Activated CD4-positive, alpha-beta memory T cell treated with anti-CD3 and anti-CD28 coated beads for 36 hours (primary cell): ENCODE measurements at regions of chr19 and their contacts with region 1.

Region 1: DNA sequence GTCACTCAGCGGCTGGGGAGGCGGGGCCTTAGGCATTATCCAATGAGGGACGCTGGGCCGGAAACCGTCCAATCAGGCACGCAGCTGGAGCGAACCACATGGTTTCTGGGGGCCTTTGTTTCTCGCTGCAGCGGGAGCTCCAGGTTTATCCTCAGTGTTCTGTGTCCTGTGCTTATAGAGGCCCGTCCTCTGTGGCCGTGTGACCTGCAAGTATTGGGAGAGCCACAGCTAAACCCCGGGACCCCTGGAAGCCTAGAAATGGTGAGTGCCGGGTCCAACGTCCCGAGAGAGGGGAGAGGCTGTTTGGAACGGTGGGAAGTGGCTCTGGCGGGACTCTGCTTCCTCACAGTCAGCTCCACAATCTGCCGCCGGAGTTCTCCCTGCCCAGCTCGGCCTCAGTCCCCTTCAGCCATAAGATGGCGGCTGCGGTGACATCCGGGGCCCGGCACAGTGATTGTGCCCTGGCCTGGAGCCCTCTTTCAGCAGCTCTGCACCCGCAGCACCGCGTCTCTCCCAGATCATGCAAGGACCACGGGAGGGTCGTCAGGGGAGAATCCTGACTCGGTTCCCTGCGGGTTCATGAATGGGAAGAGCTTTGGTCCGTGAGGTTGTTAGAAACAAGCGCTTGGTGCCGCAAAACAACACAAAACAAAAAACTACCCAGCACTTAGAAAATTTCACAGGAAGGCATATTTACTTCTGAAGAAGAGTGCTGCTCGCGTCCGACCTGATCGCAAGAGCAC is at the start of gene ZNF253:
- DNase-seq: peak; percentile 98
- H3K4me3 Mint-ChIP-seq: peak within 1 kb of the TSS; percentile 99
- H3K27ac Mint-ChIP-seq: peak within 1 kb of the TSS; percentile 98
- H3K4me1 Mint-ChIP-seq: peaks cover 19% of the 10 kb centered on the region
- H3K27me3 Mint-ChIP-seq: no peaks in the 10 kb centered on the region
- total RNA-seq, gene ZNF253: 11.0 to 12.9 TPM

Region 2: DNA sequence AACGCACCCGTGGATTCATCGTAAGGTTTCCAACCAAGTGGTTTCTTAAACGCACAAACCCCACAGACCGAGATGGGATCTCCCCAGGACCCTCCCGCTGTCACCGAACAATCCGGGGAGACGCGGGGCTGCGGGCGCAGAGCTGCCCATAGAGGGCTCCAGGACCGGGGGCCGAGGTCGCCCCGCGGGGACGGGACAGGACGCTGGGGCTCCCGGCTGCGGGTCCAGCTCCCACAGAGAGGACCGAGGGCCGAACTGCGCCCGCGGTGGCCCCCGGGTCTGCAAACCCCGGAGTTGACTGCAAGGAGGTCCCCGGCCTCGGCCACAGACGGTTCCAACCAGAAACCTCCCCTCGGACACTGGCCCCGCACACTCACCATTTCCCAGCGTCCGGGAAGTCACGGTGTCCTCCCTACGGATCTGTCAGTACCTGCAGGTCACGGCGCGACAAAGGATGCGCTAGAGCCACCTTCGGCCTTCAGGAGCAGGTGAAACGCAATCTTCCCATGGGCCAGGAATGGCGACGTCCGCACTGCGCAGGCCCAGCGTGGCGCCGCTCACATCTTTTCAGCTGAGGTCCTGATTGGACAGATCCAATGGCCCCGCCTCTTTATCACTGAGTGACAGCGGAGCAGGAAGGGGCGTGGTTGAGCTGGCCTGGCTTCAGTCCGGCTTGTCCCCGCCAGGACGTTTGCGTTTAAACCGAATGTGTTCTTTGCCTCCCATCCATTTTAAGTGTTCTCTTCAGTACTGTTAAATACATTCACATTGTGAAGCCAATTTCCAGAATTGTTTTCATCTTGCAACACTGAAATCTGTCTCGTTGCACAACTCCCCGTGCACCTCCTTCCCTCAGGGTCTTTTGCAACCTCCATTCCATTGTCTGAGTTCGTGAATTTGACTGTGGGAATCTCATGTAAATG is 133.1 kb before region 1 on chr19 and contains the start of gene ZNF14:
- CTCF ChIA-PET with region 1: no interaction called
- POLR2A ChIA-PET with region 1: interaction called, 7 read pairs
- intact Hi-C with region 1: loop called (anchors 2 kb)
- DNase-seq: peak; percentile 96
- H3K4me3 Mint-ChIP-seq: peak within 1 kb of the TSS; percentile 99
- H3K27ac Mint-ChIP-seq: peak within 1 kb of the TSS; percentile 94
- H3K4me1 Mint-ChIP-seq: peaks cover 17% of the 10 kb centered on the region
- H3K27me3 Mint-ChIP-seq: no peaks in the 10 kb centered on the region
- total RNA-seq, gene ZNF14: 6.8 to 7.9 TPM

Region 3: GRCh38 chr19:19776041-19777008 is 89.6 kb before region 1 on chr19:
- CTCF ChIA-PET with region 1: interaction called, 3 read pairs
- POLR2A ChIA-PET with region 1: interaction called, 12 read pairs
- intact Hi-C with region 1: loop called (anchors 2 kb)
- DNase-seq: peak; percentile 96
- H3K4me3 Mint-ChIP-seq: peak overlapping the region; percentile 97
- H3K27ac Mint-ChIP-seq: peak overlapping the region; percentile 93
- H3K4me1 Mint-ChIP-seq: peaks cover 44% of the 10 kb centered on the region
- H3K27me3 Mint-ChIP-seq: no peaks in the 10 kb centered on the region

Region 4: GRCh38 chr19:19900729-19901444 is 35.0 kb after region 1 on chr19 and contains the start of gene ZNF93:
- CTCF ChIA-PET with region 1: interaction called, 7 read pairs
- POLR2A ChIA-PET with region 1: interaction called, 31 read pairs
- intact Hi-C with region 1: loop called (anchors 1 kb)
- DNase-seq: peak; percentile 96
- H3K4me3 Mint-ChIP-seq: peak within 1 kb of the TSS; percentile 98
- H3K27ac Mint-ChIP-seq: peak within 1 kb of the TSS; percentile 96
- H3K4me1 Mint-ChIP-seq: peaks cover 35% of the 10 kb centered on the region
- H3K27me3 Mint-ChIP-seq: no peaks in the 10 kb centered on the region
- total RNA-seq, gene ZNF93: 15.6 to 17.0 TPM

Region 5: GRCh38 chr19:20039203-20039723 is 173.4 kb after region 1 on chr19 and contains the start of gene ZNF682:
- CTCF ChIA-PET with region 1: no interaction called
- POLR2A ChIA-PET with region 1: no interaction called
- intact Hi-C with region 1: loop called (anchors 5 kb)
- DNase-seq: peak; percentile 97
- H3K4me3 Mint-ChIP-seq: peak within 1 kb of the TSS; percentile 96
- H3K27ac Mint-ChIP-seq: peak within 1 kb of the TSS; percentile 91
- H3K4me1 Mint-ChIP-seq: peaks cover 12% of the 10 kb centered on the region
- H3K27me3 Mint-ChIP-seq: no peaks in the 10 kb centered on the region
- total RNA-seq, gene ZNF682: 7.0 to 9.1 TPM